GM12878 (cell line): ENCODE measurements at regions of chr22 and their contacts with region 1.

Region 1: DNA sequence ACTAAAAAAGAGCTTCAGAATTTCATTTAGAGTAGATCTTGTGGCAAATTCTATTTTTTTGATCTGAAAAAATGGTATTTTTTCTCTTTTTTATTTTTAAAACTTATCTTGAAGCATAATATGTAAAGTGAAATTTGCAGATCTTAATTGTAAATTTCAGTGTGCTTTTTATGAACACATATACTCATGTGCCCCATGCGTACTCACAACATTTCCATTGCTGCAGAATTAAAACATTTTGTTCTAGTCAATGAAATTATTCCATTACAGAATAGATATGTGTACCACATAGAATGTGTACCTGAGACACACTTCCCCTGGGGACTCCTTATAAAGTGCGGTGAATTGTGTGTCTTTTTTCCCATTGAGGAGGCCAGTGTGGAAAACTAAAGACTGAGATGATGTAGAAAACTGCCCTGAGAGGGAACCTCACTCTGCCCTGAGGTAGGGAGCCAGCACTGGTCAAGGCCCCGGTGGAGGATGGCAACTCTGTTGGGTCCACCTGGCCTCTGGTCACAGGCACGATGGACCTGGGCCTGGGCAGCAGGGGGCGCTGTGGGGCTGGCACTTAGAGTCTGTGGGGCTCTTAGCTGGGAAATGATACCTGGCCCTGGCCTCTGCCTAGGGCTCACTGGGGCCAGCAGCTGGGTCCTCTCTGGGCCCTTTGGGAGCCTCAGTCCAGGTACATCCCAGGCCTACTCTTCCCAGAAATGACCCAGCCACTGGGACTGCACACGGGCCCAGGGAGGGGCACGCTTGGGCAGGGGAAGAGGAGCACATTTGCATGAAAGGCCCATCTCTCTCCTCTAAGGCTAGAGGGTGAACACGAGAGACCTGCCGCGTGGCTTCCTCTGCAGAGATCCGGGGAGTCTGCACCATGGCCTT is 77.9 kb upstream of the TOP3B start:
- DNase-seq: no peak
- ATAC-seq: peak; percentile 99
- H3K4me3 ChIP-seq: no peak overlapping the region
- H3K27ac ChIP-seq: peak overlapping the region; percentile 43; the same call in 1 of the 2 replicates
- H3K4me1 ChIP-seq: peaks cover 15% of the 10 kb centered on the region
- H3K27me3 ChIP-seq: no peaks in the 10 kb centered on the region
- CTCF ChIP-seq: peak; percentile 74 to 98 (median 81)
- EP300 ChIP-seq: no peak
- POLR2A ChIP-seq: no peak
- RAD21 ChIP-seq: peak; percentile 68

Region 2: GRCh38 chr22:21972293-21972779 is 88.1 kb before region 1 on chr22:
- CTCF ChIA-PET with region 1: interaction called, 11 read pairs
- POLR2A ChIA-PET with region 1: no interaction called
- RAD21 ChIA-PET with region 1: interaction called, 9 read pairs
- SMC1A ChIA-PET with region 1: interaction called, 6 read pairs
- in situ Hi-C with region 1: no loop called
- intact Hi-C with region 1: no loop called
- DNase-seq: no peak
- ATAC-seq: peak; percentile 92
- H3K4me3 ChIP-seq: no peak overlapping the region
- H3K27ac ChIP-seq: no peak overlapping the region
- H3K4me1 ChIP-seq: no peaks in the 10 kb centered on the region; the same call in 1 of the 2 replicates
- H3K27me3 ChIP-seq: no peaks in the 10 kb centered on the region
- CTCF ChIP-seq: peak; percentile 70 to 95 (median 94)
- EP300 ChIP-seq: no peak
- POLR2A ChIP-seq: no peak
- RAD21 ChIP-seq: peak; percentile 75

Region 3: GRCh38 chr22:22043296-22044078 is 17.0 kb before region 1 on chr22:
- CTCF ChIA-PET with region 1: interaction called, 177 read pairs
- POLR2A ChIA-PET with region 1: interaction called, 24 read pairs
- RAD21 ChIA-PET with region 1: interaction called, 35 read pairs
- SMC1A ChIA-PET with region 1: interaction called, 52 read pairs
- in situ Hi-C with region 1: no loop called
- intact Hi-C with region 1: no loop called
- DNase-seq: no peak
- ATAC-seq: peak; percentile 85
- H3K4me3 ChIP-seq: peak overlapping the region; percentile 44; the same call in 1 of the 2 replicates
- H3K27ac ChIP-seq: peak overlapping the region; percentile 58
- H3K4me1 ChIP-seq: peaks cover 15% of the 10 kb centered on the region
- H3K27me3 ChIP-seq: no peaks in the 10 kb centered on the region
- CTCF ChIP-seq: peak in 2 of 3 experiments; percentile 2 to 20; a peak in 1 of 6 replicates
- EP300 ChIP-seq: no peak
- POLR2A ChIP-seq: peak; percentile 56
- RAD21 ChIP-seq: no peak

Region 4: GRCh38 chr22:22085702-22086500 is 25.5 kb after region 1 on chr22:
- CTCF ChIA-PET with region 1: interaction called, 12 read pairs
- POLR2A ChIA-PET with region 1: no interaction called
- RAD21 ChIA-PET with region 1: no interaction called
- SMC1A ChIA-PET with region 1: interaction called, 8 read pairs
- in situ Hi-C with region 1: no loop called
- intact Hi-C with region 1: no loop called
- DNase-seq: no peak
- ATAC-seq: no peak
- H3K4me3 ChIP-seq: no peak overlapping the region
- H3K27ac ChIP-seq: no peak overlapping the region
- H3K4me1 ChIP-seq: no peaks in the 10 kb centered on the region
- H3K27me3 ChIP-seq: no peaks in the 10 kb centered on the region
- CTCF ChIP-seq: no peak
- EP300 ChIP-seq: no peak
- POLR2A ChIP-seq: no peak
- RAD21 ChIP-seq: no peak

Region 5: DNA sequence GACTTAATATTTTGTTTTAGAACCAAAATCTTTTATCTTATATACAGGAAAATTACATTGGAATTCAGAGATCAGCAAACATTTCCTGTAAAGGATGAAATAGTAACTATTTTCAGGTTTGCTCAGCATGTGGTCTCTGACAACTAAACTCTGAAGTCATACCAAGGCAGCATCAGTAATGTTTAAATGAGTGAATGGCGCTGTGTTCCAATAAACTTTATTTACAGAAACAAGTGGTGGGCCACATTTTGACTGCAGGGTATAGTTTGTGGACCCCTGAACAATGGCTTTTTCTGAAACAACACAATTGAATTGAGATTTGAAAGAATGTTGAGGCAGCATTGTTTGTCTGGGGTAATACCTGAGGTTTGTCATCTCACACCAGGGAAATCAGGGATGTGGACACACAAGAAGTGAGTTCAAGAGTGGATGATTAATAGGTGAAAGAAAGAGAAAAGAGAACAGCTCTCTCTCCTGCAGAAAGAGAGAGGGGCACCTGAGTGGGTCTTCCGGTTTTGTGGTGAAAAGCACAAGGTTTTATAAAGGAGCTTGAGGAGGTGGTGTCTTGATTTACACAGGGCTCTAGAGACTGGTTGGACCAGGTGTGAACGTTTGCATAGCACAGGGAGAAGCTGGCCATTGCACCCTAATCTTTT is 70.6 kb after region 1 on chr22:
- CTCF ChIA-PET with region 1: interaction called, 12 read pairs
- POLR2A ChIA-PET with region 1: interaction called, 4 read pairs
- RAD21 ChIA-PET with region 1: no interaction called
- SMC1A ChIA-PET with region 1: interaction called, 11 read pairs
- in situ Hi-C with region 1: no loop called
- intact Hi-C with region 1: no loop called
- DNase-seq: no peak
- ATAC-seq: peak; percentile 50
- H3K4me3 ChIP-seq: no peak overlapping the region
- H3K27ac ChIP-seq: no peak overlapping the region
- H3K4me1 ChIP-seq: no peaks in the 10 kb centered on the region
- H3K27me3 ChIP-seq: no peaks in the 10 kb centered on the region
- CTCF ChIP-seq: no peak
- EP300 ChIP-seq: no peak
- POLR2A ChIP-seq: no peak
- RAD21 ChIP-seq: no peak

Region 6: GRCh38 chr22:22156716-22157347 is 96.4 kb after region 1 on chr22:
- CTCF ChIA-PET with region 1: interaction called, 33 read pairs
- POLR2A ChIA-PET with region 1: no interaction called
- RAD21 ChIA-PET with region 1: interaction called, 15 read pairs
- SMC1A ChIA-PET with region 1: interaction called, 16 read pairs
- in situ Hi-C with region 1: no loop called
- intact Hi-C with region 1: loop called (anchors 5 kb)
- DNase-seq: peak; percentile 59
- ATAC-seq: peak; percentile 94
- H3K4me3 ChIP-seq: no peak overlapping the region
- H3K27ac ChIP-seq: peak overlapping the region; percentile 86
- H3K4me1 ChIP-seq: peaks cover 10% of the 10 kb centered on the region
- H3K27me3 ChIP-seq: no peaks in the 10 kb centered on the region
- CTCF ChIP-seq: peak; percentile 67 to 79 (median 75)
- EP300 ChIP-seq: 0 out of 4 replicates have a peak, but pooled peaks of 1 of the 2 experiments have one; percentile 23
- POLR2A ChIP-seq: peak; percentile 41
- RAD21 ChIP-seq: peak; percentile 80

Region 7: DNA sequence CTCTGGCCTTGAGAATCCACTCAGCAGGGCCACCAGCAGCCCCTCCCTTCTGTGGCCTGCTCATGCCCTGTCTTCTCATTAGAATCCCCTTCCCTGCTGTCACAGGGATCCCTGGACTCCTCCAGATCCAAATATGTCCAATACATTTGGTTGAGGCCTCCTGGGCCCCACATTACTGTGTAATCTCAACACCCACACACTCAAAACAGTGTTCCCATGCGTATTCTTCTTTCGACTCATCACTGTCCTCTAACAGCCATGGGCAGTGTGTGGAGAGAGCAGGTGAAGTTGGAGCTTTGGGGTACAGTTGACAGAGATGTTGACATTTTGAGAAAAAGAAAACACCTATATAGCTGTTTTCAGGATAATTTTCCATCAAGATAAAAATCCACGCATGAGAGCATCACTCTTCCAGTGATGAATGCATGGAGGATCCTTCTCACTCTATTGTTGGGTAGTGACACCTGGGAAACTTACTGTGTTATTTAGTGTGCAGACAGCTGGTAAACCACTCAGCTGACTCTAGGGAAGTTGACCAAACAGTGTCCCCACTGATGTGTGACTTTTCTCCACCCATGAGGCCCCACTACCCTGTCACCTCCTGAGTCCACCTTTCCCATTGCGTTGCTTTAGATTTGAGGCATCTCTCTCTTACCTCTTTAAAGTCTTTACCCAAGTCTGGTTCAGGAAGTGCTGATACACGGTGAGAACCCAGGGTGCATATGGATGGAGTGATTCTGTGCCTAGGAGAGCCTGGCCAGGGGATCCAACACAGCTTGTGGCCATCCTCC is 155.4 kb after region 1 on chr22:
- CTCF ChIA-PET with region 1: no interaction called
- POLR2A ChIA-PET with region 1: no interaction called
- RAD21 ChIA-PET with region 1: no interaction called
- SMC1A ChIA-PET with region 1: no interaction called
- in situ Hi-C with region 1: no loop called
- intact Hi-C with region 1: no loop called
- DNase-seq: no peak
- ATAC-seq: no peak
- H3K4me3 ChIP-seq: no peak overlapping the region
- H3K27ac ChIP-seq: no peak overlapping the region
- H3K4me1 ChIP-seq: peaks cover 3% of the 10 kb centered on the region; the same call in 1 of the 2 replicates
- H3K27me3 ChIP-seq: no peaks in the 10 kb centered on the region
- CTCF ChIP-seq: no peak
- EP300 ChIP-seq: no peak
- POLR2A ChIP-seq: no peak
- RAD21 ChIP-seq: no peak

Region 8: GRCh38 chr22:22235558-22235957 is 175.1 kb after region 1 on chr22:
- CTCF ChIA-PET with region 1: interaction called, 12 read pairs
- POLR2A ChIA-PET with region 1: no interaction called
- RAD21 ChIA-PET with region 1: no interaction called
- SMC1A ChIA-PET with region 1: interaction called, 4 read pairs
- in situ Hi-C with region 1: no loop called
- intact Hi-C with region 1: no loop called
- DNase-seq: peak; percentile 17
- ATAC-seq: peak; percentile 48; the same call in 2 of the 3 replicates
- H3K4me3 ChIP-seq: no peak overlapping the region
- H3K27ac ChIP-seq: no peak overlapping the region
- H3K4me1 ChIP-seq: no peaks in the 10 kb centered on the region
- H3K27me3 ChIP-seq: no peaks in the 10 kb centered on the region
- CTCF ChIP-seq: peak; percentile 51 to 55 (median 52); a peak in 5 of 6 replicates
- EP300 ChIP-seq: no peak
- POLR2A ChIP-seq: no peak
- RAD21 ChIP-seq: peak; percentile 62